ENCODE measurements at regions of chr7 and their contacts with region 1.

Region 1: DNA sequence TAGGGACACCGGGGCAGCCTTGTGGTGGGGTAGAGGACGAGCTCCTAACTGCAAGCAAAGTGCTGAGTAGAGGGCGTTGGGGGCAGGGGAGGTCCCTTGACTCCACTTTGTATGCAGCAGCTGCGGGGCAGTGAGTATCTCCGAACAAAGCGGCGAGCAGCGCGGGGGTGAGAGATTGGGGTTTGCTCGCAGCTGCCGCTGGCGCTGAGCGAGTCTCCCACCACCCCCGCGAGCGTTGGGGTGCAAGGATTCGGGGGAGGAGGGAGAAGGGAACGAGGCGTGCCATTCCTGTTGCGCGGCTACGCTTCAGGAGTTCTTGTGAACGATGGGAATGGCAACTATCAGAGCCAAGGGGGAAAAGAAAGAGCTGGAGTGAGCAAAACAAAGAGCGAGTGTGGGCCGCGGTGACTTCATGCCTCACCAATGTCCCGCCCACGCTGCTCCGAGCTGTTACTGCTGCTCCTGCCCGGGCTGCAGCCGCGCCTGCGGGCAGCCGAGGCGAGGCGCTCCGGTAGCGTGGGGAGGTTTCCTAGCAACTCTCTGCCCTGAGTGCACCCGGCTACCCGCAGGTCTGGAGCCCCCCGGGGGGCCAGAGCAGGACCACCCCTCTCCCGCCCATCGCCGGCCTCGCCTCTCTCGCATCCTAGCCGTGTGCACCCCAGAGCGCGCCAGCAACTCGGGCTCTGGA is at the start of gene ITGB8:
- DNase-seq: peak; percentile 27
- H3K4me3 Mint-ChIP-seq: peak within 1 kb of the TSS; percentile 88
- H3K27ac Mint-ChIP-seq: peak within 1 kb of the TSS; percentile 77
- H3K4me1 Mint-ChIP-seq: peaks cover 26% of the 10 kb centered on the region
- H3K27me3 Mint-ChIP-seq: peaks cover 67% of the 10 kb centered on the region
- total RNA-seq, gene ITGB8: 0.03 TPM in 1 of 2 replicates, not detected in the other

Region 2: GRCh38 chr7:20280475-20281351 is 49.7 kb before region 1 on chr7:
- intact Hi-C with region 1: loop called (anchors 1 kb)
- DNase-seq: no peak
- H3K4me3 Mint-ChIP-seq: no peak overlapping the region
- H3K27ac Mint-ChIP-seq: no peak overlapping the region
- H3K4me1 Mint-ChIP-seq: no peaks in the 10 kb centered on the region
- H3K27me3 Mint-ChIP-seq: peaks cover 2% of the 10 kb centered on the region

Measured in activated T-helper 1 cell treated with anti-CD3 and anti-CD28 coated beads, Interleukin-12 subunit alpha, Interleukin-12 subunit beta, Interleukin-2, Interleukin-4 antibody, amounts not matched to agents 30 ng/mL and 10 ng/mL and 1 ng/mL, durations not matched to agents 14 hours and 24 hours and 36 hours (primary cell).